ENCODE measurements at regions of chr2 and their contacts with region 1.

Region 1: GRCh38 chr2:28997237-28997846 is 16.2 kb downstream of the TOGARAM2 start:
- DNase-seq: peak in 1 of 2 experiments; percentile 21
- H3K4me3 ChIP-seq: no peak overlapping the region
- H3K4me3 Mint-ChIP-seq: peak overlapping the region; percentile 3
- H3K27ac Mint-ChIP-seq: no peak overlapping the region
- H3K4me1 ChIP-seq: peaks cover 9% of the 10 kb centered on the region; the same call in 1 of the 2 replicates
- H3K4me1 Mint-ChIP-seq: peaks cover 25% of the 10 kb centered on the region
- H3K27me3 ChIP-seq: no peaks in the 10 kb centered on the region
- H3K27me3 Mint-ChIP-seq: no peaks in the 10 kb centered on the region
- CTCF ChIP-seq: no peak

Region 2: DNA sequence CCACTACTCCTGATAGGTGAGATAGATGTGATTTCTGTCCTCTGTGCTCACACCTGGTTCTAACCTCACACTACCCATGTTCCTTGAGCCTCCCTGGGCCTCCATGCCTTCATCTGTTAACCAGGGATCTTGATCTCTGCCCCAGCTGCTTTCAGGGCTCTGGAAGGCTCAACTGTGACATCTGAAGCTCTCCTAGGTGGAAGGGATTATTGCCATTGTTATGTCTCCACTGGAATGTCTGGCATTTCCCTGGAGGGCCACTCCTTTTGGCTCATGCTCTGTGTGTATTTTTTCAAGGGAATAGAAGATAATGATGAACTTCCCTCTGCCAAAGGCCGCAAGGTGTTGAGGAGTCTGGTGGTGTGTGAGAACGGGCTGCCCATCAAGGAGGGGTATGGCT is 35.8 kb after region 1 on chr2:
- CTCF ChIA-PET with region 1: no interaction called
- POLR2A ChIA-PET with region 1: no interaction called
- intact Hi-C with region 1: loop called (anchors 1 kb)
- DNase-seq: peak; percentile 78 to 87
- H3K4me3 ChIP-seq: no peak overlapping the region
- H3K4me3 Mint-ChIP-seq: peak overlapping the region; percentile 29
- H3K27ac Mint-ChIP-seq: peak overlapping the region; percentile 96
- H3K4me1 ChIP-seq: peaks cover 23% of the 10 kb centered on the region
- H3K4me1 Mint-ChIP-seq: peaks cover 26% of the 10 kb centered on the region
- H3K27me3 ChIP-seq: no peaks in the 10 kb centered on the region
- H3K27me3 Mint-ChIP-seq: no peaks in the 10 kb centered on the region
- CTCF ChIP-seq: no peak